Posterior cingulate gyrus (tissue), 11 donors: ENCODE measurements at regions of chr7 and their contacts with region 1.

Region 1: GRCh38 chr7:90595801-90596671 is at the start of gene CDK14:
- DNase-seq: peak; percentile 60 to 94 (median 70)

Region 2: GRCh38 chr7:90346336-90347125 is 249.5 kb before region 1 on chr7 and contains the start of gene GTPBP10:
- intact Hi-C with region 1: loop called (anchors 10 kb)
- DNase-seq: peak; percentile 87 to 99 (median 92)